A673 (cell line): ENCODE measurements at regions of chr7 and their contacts with region 1.

Region 1: GRCh38 chr7:37833107-37833817 is 15.1 kb upstream of the NME8 start:
- DNase-seq: peak; percentile 67
- H3K4me3 ChIP-seq: peak overlapping the region; percentile 36
- H3K27ac ChIP-seq: no peak overlapping the region
- H3K4me1 ChIP-seq: no peaks in the 10 kb centered on the region
- H3K27me3 ChIP-seq: no peaks in the 10 kb centered on the region
- CTCF ChIP-seq: peak; percentile 75

Region 2: GRCh38 chr7:37208528-37208927 is 624.7 kb before region 1 on chr7:
- CTCF ChIA-PET with region 1: no interaction called
- POLR2A ChIA-PET with region 1: no interaction called
- intact Hi-C with region 1: loop called (anchors 5 kb)
- DNase-seq: peak; percentile 34
- H3K4me3 ChIP-seq: no peak overlapping the region
- H3K27ac ChIP-seq: no peak overlapping the region
- H3K4me1 ChIP-seq: no peaks in the 10 kb centered on the region
- H3K27me3 ChIP-seq: peaks cover 4% of the 10 kb centered on the region
- CTCF ChIP-seq: peak; percentile 49

Region 3: DNA sequence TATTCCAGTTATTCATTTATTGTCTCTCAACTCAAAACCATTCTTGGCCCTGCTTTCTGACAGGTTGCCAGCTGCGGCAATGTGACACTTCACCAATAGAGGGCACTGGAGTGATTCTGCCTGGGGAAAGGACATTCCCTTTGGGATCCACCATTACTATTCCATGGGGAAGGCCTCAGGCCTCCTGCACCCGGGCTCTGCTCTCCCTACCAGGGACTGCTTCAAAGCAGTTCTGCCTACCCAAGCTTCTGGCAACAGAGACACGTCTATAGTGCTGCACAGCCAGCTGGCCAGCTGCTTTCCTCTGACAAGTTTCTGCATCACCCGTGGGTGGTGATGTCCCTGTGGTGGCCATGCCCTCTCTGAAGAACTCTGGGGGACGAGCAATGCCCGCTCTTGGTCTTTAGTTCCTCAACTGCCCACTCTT is 548.4 kb before region 1 on chr7:
- CTCF ChIA-PET with region 1: no interaction called
- POLR2A ChIA-PET with region 1: no interaction called
- intact Hi-C with region 1: loop called (anchors 2 kb)
- DNase-seq: peak; percentile 57
- H3K4me3 ChIP-seq: no peak overlapping the region
- H3K27ac ChIP-seq: no peak overlapping the region
- H3K4me1 ChIP-seq: no peaks in the 10 kb centered on the region
- H3K27me3 ChIP-seq: no peaks in the 10 kb centered on the region
- CTCF ChIP-seq: peak; percentile 88

Region 4: DNA sequence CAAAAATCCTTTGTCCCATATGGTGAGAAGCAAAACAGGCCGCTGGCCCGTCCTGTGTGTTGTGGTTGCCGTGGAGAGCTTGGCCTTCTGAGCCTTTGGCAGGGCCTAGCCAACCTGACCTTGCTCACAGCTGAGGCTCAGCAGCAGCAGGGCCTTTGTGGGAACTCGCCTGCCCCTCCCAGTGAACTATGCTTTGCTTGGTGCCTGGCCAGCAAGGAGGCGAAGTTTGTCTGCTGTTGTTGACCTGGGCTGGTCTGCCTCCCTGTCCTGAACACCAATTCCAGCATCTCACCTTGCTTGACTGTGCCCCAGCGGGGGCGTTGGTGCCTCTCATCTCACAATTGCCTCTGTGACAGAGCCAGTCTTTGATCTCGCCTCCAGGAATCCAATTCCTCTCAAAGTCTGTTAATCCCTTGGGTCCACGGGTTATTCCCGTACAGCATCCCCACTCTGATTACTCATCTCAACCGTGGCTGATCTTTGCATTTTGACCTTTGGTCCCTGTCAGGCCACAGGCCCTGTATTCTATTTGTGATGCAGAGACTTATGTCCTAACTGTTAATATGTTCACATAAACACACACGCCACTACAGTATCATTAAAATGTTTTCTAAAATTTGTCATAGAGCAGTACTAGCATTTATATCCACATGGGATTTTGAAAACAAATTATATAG is 109.8 kb after region 1 on chr7:
- CTCF ChIA-PET with region 1: no interaction called
- POLR2A ChIA-PET with region 1: no interaction called
- intact Hi-C with region 1: no loop called
- DNase-seq: no peak
- H3K4me3 ChIP-seq: no peak overlapping the region
- H3K27ac ChIP-seq: no peak overlapping the region
- H3K4me1 ChIP-seq: no peaks in the 10 kb centered on the region
- H3K27me3 ChIP-seq: no peaks in the 10 kb centered on the region
- CTCF ChIP-seq: no peak